Breast epithelium (tissue), 4 donors: ENCODE measurements at regions of chr1 and their contacts with region 1.

Region 1: DNA sequence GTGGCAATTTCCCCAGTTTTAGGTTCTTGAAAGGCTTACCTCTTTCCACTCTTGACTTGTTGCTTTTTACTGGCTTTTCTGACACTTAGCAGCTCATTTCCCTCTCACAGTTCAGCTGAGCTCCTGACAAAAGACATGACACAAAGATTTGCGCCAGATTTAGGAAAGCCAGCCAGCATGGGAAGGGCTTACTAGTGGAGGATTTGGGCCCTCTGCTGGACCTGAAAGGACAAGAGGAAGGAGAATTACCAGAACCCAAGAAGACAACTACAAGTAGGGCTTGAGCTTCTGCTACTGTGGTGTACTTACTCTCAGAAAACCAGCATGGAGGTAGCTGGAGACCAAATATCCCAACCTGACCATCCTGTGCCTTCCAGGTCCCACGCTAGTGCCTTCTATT is 784.5 kb downstream of the BRINP3 start:
- DNase-seq: no peak
- H3K4me3 ChIP-seq: no peak overlapping the region
- H3K27ac ChIP-seq: no peak overlapping the region
- H3K4me1 ChIP-seq: no peaks in the 10 kb centered on the region
- H3K27me3 ChIP-seq: no peaks in the 10 kb centered on the region
- CTCF ChIP-seq: no peak
- POLR2A ChIP-seq: no peak

Region 2: DNA sequence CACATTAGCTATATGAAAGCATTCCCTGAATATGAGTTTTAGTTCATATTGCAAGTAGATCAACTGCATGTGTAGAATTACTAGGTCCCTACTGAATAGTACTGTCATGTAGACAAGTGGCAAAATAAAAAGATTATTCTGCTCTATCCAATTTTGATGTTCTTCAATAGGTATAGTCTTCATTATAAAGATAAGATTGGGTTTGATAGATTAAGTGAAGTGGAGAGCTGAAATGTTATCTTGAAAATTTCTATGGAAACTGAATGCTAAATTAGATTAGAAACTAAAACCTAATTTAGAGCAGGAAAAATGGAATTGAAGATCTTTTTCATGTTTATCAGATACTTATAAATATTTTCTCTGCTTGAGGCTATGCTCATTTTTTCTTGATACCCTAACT is 825.5 kb before region 1 on chr1:
- intact Hi-C with region 1: no loop called
- DNase-seq: no peak
- H3K4me3 ChIP-seq: no peak overlapping the region
- H3K27ac ChIP-seq: no peak overlapping the region
- H3K4me1 ChIP-seq: no peaks in the 10 kb centered on the region
- H3K27me3 ChIP-seq: no peaks in the 10 kb centered on the region
- CTCF ChIP-seq: no peak
- POLR2A ChIP-seq: no peak

Region 3: DNA sequence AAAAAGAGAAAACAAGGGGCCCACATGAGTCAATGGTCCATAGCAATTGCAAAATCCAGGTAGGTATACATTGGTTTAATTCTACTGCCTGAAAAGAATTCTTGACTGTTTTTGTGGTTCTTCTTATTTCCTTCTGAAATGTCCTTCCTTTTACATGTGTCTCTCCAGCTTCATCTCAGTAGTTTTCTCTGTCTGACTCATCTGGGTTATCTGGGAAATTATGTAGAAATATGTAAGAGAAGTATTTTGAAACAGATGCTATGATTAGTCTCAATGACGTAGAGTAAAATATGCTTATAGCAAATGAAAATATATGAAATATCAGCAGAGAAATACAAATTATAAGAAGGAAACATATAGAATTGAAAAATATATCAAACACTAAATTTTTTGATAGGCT is 168.6 kb before region 1 on chr1:
- intact Hi-C with region 1: loop called (anchors 5 kb)
- DNase-seq: no peak
- H3K4me3 ChIP-seq: no peak overlapping the region
- H3K27ac ChIP-seq: no peak overlapping the region
- H3K4me1 ChIP-seq: no peaks in the 10 kb centered on the region
- H3K27me3 ChIP-seq: no peaks in the 10 kb centered on the region
- CTCF ChIP-seq: no peak
- POLR2A ChIP-seq: no peak

Region 4: GRCh38 chr1:191641420-191642260 is 1948.5 kb after region 1 on chr1:
- intact Hi-C with region 1: no loop called
- DNase-seq: no peak
- H3K4me3 ChIP-seq: no peak overlapping the region
- H3K27ac ChIP-seq: no peak overlapping the region
- H3K4me1 ChIP-seq: no peaks in the 10 kb centered on the region
- H3K27me3 ChIP-seq: no peaks in the 10 kb centered on the region
- CTCF ChIP-seq: no peak
- POLR2A ChIP-seq: no peak